Endothelial cell of umbilical vein (primary cell): ENCODE measurements at regions of chr5 and their contacts with region 1.

Region 1: GRCh38 chr5:179763215-179763945 is 30.4 kb upstream of the LTC4S start:
- DNase-seq: peak; percentile 85
- H3K4me3 ChIP-seq: no peak overlapping the region
- H3K27ac ChIP-seq: no peak overlapping the region
- H3K4me1 ChIP-seq: peaks cover 55% of the 10 kb centered on the region
- H3K27me3 ChIP-seq: no peaks in the 10 kb centered on the region
- CTCF ChIP-seq: peak; percentile 77 to 85
- POLR2A ChIP-seq: no peak

Region 2: DNA sequence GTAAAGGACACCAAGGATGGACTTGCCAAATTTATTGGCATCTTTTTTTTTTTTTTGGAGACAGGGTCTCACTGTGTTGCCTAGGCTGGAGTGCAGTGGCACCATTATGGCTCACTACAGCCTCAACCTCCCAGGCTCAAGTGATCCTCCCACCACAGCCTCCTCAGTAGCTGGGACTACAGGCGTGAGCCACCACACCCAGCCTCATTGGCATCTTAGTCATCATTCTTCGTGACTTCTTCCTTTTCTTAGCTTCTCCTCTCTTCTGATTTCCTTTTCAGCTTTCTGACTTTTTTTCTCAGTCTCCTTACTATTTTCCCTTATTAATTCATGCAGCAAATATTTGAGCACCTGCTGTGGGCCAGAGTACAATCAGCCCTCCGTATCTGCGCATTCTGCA is 24.6 kb before region 1 on chr5:
- CTCF ChIA-PET with region 1: interaction called, 11 read pairs
- POLR2A ChIA-PET with region 1: no interaction called
- dilution Hi-C with region 1: no loop called
- intact Hi-C with region 1: no loop called
- DNase-seq: no peak
- H3K4me3 ChIP-seq: no peak overlapping the region
- H3K27ac ChIP-seq: no peak overlapping the region
- H3K4me1 ChIP-seq: peaks cover 13% of the 10 kb centered on the region
- H3K27me3 ChIP-seq: no peaks in the 10 kb centered on the region
- CTCF ChIP-seq: no peak
- POLR2A ChIP-seq: no peak

Region 3: DNA sequence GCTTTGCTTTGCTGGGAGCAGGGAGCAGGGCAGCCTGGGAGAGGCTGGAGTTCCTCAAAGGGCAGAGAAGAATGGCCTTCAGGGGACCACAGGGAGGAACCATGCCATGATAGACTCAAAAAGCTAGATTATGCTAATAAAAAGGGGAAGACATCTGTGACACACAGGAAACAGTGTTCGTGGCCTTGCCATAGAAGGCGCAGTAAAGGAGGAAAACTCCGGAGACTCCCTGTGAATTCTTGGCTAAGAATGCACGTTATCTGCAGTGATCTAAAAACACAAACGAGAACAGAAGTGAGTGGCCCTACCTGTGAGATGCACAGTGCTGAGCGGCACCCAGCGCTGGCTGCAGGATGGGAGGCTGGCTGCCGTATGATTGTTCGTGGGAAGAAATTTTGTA is 14.5 kb after region 1 on chr5:
- CTCF ChIA-PET with region 1: interaction called, 22 read pairs
- POLR2A ChIA-PET with region 1: interaction called, 5 read pairs
- dilution Hi-C with region 1: no loop called
- intact Hi-C with region 1: no loop called
- DNase-seq: no peak
- H3K4me3 ChIP-seq: no peak overlapping the region
- H3K27ac ChIP-seq: no peak overlapping the region
- H3K4me1 ChIP-seq: peaks cover 14% of the 10 kb centered on the region
- H3K27me3 ChIP-seq: no peaks in the 10 kb centered on the region
- CTCF ChIP-seq: no peak
- POLR2A ChIP-seq: no peak

Region 4: GRCh38 chr5:179821581-179822432 is 58.4 kb after region 1 on chr5:
- CTCF ChIA-PET with region 1: interaction called, 10 read pairs
- POLR2A ChIA-PET with region 1: interaction called, 3 read pairs
- dilution Hi-C with region 1: no loop called
- intact Hi-C with region 1: loop called (anchors 1 kb)
- DNase-seq: peak; percentile 93
- H3K4me3 ChIP-seq: peak overlapping the region; percentile 49 to 90 (median 82)
- H3K27ac ChIP-seq: peak overlapping the region; percentile 96
- H3K4me1 ChIP-seq: peaks cover 37% of the 10 kb centered on the region
- H3K27me3 ChIP-seq: no peaks in the 10 kb centered on the region
- CTCF ChIP-seq: no peak
- POLR2A ChIP-seq: peak; percentile 85

Region 5: GRCh38 chr5:179907570-179908324 is 144.4 kb after region 1 on chr5 and contains the start of gene TBC1D9B:
- CTCF ChIA-PET with region 1: no interaction called
- POLR2A ChIA-PET with region 1: interaction called, 4 read pairs
- dilution Hi-C with region 1: no loop called
- intact Hi-C with region 1: loop called (anchors 1 kb)
- DNase-seq: peak; percentile 45
- H3K4me3 ChIP-seq: peak within 1 kb of the TSS; percentile 36 to 51 (median 48)
- H3K27ac ChIP-seq: no peak within 1 kb of the TSS
- H3K4me1 ChIP-seq: peaks cover 29% of the 10 kb centered on the region
- H3K27me3 ChIP-seq: no peaks in the 10 kb centered on the region
- CTCF ChIP-seq: peak; percentile 15 to 23
- POLR2A ChIP-seq: peak; percentile 80
- total RNA-seq, gene TBC1D9B: 120 and 150 TPM in 2 replicates